ENCODE measurements at regions of chr19 and their contacts with region 1.

Region 1: GRCh38 chr19:54266133-54266532 is 9.1 kb upstream of the LILRB5 start:
- DNase-seq: peak; percentile 59 to 72
- ATAC-seq: peak; percentile 73 to 76 (median 76)
- H3K4me3 ChIP-seq: no peak overlapping the region
- H3K4me3 Mint-ChIP-seq: no peak overlapping the region
- H3K27ac ChIP-seq: no peak overlapping the region
- H3K27ac Mint-ChIP-seq: no peak overlapping the region
- H3K4me1 ChIP-seq: peaks cover 3% of the 10 kb centered on the region
- H3K4me1 Mint-ChIP-seq: no peaks in the 10 kb centered on the region
- H3K27me3 ChIP-seq: no peaks in the 10 kb centered on the region
- H3K27me3 Mint-ChIP-seq: peaks cover 13 to 16% of the 10 kb centered on the region in 2 donors
- CTCF ChIP-seq: peak; percentile 81

Region 2: DNA sequence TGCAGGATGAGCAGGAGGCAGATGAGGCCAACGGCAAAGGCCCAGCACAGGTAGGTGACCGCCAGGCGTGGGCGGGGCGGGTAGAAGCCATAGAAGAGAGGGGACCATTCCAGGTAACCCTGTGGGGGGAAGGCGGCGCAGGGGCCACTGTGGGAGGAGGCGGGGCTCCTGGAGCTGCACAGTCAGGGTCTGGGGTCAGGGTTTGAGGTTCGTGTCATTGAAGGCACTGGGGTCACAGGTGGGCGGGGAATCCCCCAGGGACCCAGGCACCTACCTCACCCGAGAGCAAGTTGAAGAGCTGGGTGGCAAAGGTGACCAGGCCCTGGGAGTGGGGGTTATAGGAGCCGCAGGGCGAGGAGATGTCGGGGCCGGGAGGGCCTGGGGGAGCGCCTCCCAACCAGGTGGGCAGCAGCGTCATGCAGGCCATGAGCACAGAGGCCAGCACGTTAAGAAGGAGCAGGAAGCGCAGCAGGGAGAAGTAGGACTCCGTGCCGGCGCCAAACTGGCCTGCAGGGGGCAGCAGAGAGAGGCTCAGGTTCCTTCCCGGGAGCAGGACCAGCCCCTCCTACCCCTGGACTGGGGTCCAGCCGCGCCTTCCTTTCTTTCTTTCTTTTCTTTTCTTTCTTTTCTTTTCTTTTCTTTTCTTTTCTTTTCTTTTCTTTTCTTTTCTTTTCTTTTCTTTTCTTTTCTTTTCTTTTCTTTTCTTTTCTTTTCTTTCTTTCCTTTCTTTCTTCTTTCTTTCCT is 97.8 kb before region 1 on chr19:
- intact Hi-C with region 1: loop called (anchors 1 kb)
- DNase-seq: peak; percentile 89 to 94
- ATAC-seq: peak; percentile 75 to 88 (median 82)
- H3K4me3 ChIP-seq: no peak overlapping the region
- H3K4me3 Mint-ChIP-seq: no peak overlapping the region
- H3K27ac ChIP-seq: no peak overlapping the region
- H3K27ac Mint-ChIP-seq: peak overlapping the region in 1 of 2 donors; percentile 27
- H3K4me1 ChIP-seq: peaks cover 32% of the 10 kb centered on the region
- H3K4me1 Mint-ChIP-seq: peaks cover 12 to 31% of the 10 kb centered on the region in 2 donors
- H3K27me3 ChIP-seq: no peaks in the 10 kb centered on the region
- H3K27me3 Mint-ChIP-seq: peaks cover 0 to 4% of the 10 kb centered on the region in 2 donors
- CTCF ChIP-seq: peak; percentile 86

Measured in natural killer cell (primary cell).